Activated B cell treated with CpG ODN at 0.5 μM for 24 hours (primary cell): ENCODE measurements at regions of chr14 and their contacts with region 1.

Region 1: GRCh38 chr14:102316743-102317563 is 2.6 kb upstream of the ZNF839 start:
- DNase-seq: peak; percentile 99
- ATAC-seq: peak; percentile 71
- H3K4me3 Mint-ChIP-seq: peak overlapping the region; percentile 96
- H3K27ac Mint-ChIP-seq: peak overlapping the region; percentile 89
- H3K4me1 Mint-ChIP-seq: peaks cover 63% of the 10 kb centered on the region
- H3K27me3 Mint-ChIP-seq: no peaks in the 10 kb centered on the region
- CTCF ChIP-seq: no peak

Region 2: GRCh38 chr14:101707068-101707842 is 609.7 kb before region 1 on chr14:
- CTCF ChIA-PET with region 1: interaction called, 18 read pairs
- POLR2A ChIA-PET with region 1: interaction called, 4 read pairs
- intact Hi-C with region 1: loop called (anchors 1 kb)
- DNase-seq: peak; percentile 30
- ATAC-seq: peak; percentile 70
- H3K4me3 Mint-ChIP-seq: peak overlapping the region; percentile 46
- H3K27ac Mint-ChIP-seq: peak overlapping the region; percentile 31
- H3K4me1 Mint-ChIP-seq: peaks cover 22% of the 10 kb centered on the region
- H3K27me3 Mint-ChIP-seq: peaks cover 3% of the 10 kb centered on the region
- CTCF ChIP-seq: peak; percentile 65

Region 3: DNA sequence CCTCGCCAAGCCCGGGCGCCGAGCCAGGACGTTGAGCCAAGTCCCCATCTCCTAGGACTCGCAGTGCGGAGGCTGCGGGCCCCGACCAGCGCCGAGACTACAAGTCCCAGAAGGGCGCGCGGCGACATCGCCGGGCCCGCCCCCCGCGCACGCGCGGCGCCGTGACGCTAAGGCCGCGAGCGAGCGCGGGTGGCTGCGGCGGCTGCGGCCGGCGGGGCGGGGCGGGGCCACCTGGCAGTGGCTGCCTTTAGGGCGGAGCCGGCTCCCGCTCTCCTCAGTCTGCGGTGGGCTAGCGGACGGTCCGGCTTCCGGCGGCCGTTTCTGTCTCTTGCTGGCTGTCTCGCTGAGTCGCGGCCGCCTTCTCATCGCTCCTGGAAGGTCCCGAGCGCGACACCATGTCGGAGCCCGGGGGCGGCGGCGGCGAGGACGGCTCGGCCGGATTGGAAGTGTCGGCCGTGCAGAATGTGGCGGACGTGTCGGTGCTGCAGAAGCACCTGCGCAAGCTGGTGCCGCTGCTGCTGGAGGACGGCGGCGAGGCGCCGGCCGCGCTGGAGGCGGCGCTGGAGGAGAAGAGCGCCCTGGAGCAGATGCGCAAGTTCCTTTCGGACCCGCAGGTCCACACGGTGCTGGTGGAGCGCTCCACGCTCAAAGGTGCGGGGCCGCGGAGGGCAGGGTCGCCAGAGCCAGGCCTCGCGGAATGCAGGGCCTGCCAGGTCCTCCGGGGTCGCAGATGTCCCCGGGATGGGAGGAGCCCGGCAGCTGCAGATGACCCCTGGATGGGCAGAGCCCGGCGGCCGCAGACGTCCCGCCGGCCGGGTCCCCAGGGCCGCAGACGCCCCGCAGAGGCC is 352.4 kb before region 1 on chr14 and contains the start of gene DYNC1H1:
- CTCF ChIA-PET with region 1: interaction called, 5 read pairs
- POLR2A ChIA-PET with region 1: interaction called, 3 read pairs
- intact Hi-C with region 1: loop called (anchors 1 kb)
- DNase-seq: peak; percentile 92
- ATAC-seq: peak; percentile 87
- H3K4me3 Mint-ChIP-seq: peak within 1 kb of the TSS; percentile 92
- H3K27ac Mint-ChIP-seq: peak within 1 kb of the TSS; percentile 93
- H3K4me1 Mint-ChIP-seq: peaks cover 43% of the 10 kb centered on the region
- H3K27me3 Mint-ChIP-seq: no peaks in the 10 kb centered on the region
- CTCF ChIP-seq: no peak
- total RNA-seq, gene DYNC1H1: 208 and 236 TPM in 2 replicates

Region 4: DNA sequence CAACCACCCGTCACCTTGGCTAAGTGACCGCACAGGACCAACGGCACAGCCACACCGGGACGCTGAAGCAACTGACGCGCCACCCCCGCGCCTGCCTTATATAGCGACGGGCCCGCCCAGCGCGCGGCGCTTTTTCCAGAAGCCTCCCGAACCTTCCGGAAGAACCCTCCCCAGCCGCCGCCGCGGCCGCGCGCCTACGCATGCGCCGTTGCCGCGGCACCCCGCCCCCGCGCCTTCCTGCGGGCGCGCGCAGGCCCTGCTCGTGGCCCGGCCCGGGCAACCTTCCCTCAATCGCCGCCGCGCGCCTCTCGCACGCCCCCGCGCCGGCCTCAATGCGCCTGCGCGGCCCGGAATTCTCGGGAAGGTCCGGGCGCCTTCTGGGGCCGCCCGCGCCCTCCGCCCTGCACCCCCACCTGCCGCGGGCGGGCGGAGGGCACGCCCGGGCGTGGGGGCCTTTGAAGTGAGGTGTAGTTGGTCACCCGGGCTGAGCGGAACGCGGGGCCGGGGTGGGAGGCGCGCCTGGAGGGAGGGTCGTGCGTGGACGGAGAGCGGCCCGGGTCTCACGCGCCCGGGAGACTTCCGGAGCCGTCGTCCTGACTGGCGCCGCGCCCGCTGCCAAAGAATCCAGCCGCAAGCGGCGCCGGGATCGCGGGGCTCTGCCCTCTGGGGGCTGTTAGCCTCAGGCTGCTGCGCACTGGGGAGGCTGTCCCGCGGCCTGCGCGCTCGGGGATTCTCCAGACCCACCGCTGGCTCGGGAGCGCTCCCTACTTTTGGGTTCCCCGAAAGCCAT is 229.8 kb before region 1 on chr14 and contains the start of gene HSP90AA1:
- CTCF ChIA-PET with region 1: no interaction called
- POLR2A ChIA-PET with region 1: interaction called, 6 read pairs
- intact Hi-C with region 1: loop called (anchors 1 kb)
- DNase-seq: peak; percentile 95
- ATAC-seq: peak; percentile 69
- H3K4me3 Mint-ChIP-seq: peak within 1 kb of the TSS; percentile 93
- H3K27ac Mint-ChIP-seq: peak within 1 kb of the TSS; percentile 88
- H3K4me1 Mint-ChIP-seq: peaks cover 60% of the 10 kb centered on the region
- H3K27me3 Mint-ChIP-seq: no peaks in the 10 kb centered on the region
- CTCF ChIP-seq: no peak
- total RNA-seq, gene HSP90AA1: 431 and 435 TPM in 2 replicates

Region 5: GRCh38 chr14:102304611-102305509 is 12.1 kb before region 1 on chr14 and contains the start of gene MOK:
- CTCF ChIA-PET with region 1: interaction called, 20 read pairs
- POLR2A ChIA-PET with region 1: interaction called, 26 read pairs
- intact Hi-C with region 1: loop called (anchors 1 kb)
- DNase-seq: peak; percentile 99
- ATAC-seq: peak; percentile 88
- H3K4me3 Mint-ChIP-seq: peak within 1 kb of the TSS; percentile 96
- H3K27ac Mint-ChIP-seq: peak within 1 kb of the TSS; percentile 95
- H3K4me1 Mint-ChIP-seq: peaks cover 9% of the 10 kb centered on the region
- H3K27me3 Mint-ChIP-seq: peaks cover 4% of the 10 kb centered on the region
- CTCF ChIP-seq: no peak
- total RNA-seq, gene MOK: 1.8 and 3.1 TPM in 2 replicates

Region 6: DNA sequence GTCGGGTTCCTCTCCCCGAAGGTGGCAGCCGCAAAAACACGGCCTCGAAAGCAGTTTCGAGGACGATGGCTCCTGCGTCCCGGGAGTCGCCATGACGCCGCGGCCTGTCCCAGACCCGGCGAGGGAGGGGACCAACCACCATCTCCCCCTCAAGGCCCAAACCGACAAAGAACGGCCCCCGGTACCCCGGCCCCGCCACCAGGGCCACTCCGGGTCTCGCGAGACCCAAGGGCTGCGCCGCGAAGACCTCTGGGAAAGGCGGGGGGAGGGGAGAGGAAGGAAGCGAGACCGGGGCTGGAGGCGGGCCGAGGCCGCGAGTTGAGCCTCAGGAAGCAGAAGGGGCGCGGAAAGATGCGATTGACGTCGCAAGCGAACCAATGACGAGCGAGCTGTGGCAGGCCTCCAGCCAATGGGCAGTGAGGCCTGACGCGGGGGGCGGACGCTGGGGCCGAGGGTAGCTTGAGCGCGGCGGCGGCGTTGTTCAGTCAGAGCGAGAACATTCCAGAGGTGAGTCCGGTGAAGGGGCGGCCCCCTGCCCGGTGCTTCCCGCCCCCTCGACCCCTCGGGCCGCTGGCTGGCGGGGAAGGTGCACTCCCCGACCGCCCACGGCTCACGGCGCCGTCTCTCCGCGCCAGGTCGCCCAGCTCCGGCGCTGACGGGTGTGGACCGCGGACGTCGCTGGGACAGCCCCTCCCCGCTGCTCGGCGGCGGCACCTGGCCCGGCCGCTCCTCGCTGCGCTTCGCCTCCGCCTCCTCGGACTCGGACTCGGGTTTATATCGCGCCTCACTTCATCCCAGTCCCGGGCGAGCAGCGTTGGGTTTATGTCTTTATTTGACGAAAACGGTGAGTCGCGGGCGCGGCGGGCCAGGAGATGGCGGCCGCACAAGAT is 1017.0 kb after region 1 on chr14 and contains the start of gene EIF5:
- CTCF ChIA-PET with region 1: no interaction called
- POLR2A ChIA-PET with region 1: interaction called, 6 read pairs
- intact Hi-C with region 1: loop called (anchors 10 kb)
- DNase-seq: peak; percentile 98
- ATAC-seq: peak; percentile 84
- H3K4me3 Mint-ChIP-seq: peak within 1 kb of the TSS; percentile 91
- H3K27ac Mint-ChIP-seq: peak within 1 kb of the TSS; percentile 93
- H3K4me1 Mint-ChIP-seq: peaks cover 33% of the 10 kb centered on the region
- H3K27me3 Mint-ChIP-seq: no peaks in the 10 kb centered on the region
- CTCF ChIP-seq: no peak
- total RNA-seq, gene EIF5: 234 and 274 TPM in 2 replicates